Left lung (tissue), 14 donors: ENCODE measurements at regions of chr4 and their contacts with region 1.

Region 1: GRCh38 chr4:40309250-40309774 is 25.8 kb upstream of the CHRNA9 start:
- DNase-seq: peak; percentile 83 to 94 (median 90)
- ATAC-seq: peak; percentile 88
- H3K4me3 ChIP-seq: no peak overlapping the region
- H3K27ac ChIP-seq: no peak overlapping the region
- H3K4me1 ChIP-seq: peaks cover 0 to 53% of the 10 kb centered on the region in 2 donors
- H3K27me3 ChIP-seq: no peaks in the 10 kb centered on the region
- CTCF ChIP-seq: peak; percentile 90 to 92

Region 2: DNA sequence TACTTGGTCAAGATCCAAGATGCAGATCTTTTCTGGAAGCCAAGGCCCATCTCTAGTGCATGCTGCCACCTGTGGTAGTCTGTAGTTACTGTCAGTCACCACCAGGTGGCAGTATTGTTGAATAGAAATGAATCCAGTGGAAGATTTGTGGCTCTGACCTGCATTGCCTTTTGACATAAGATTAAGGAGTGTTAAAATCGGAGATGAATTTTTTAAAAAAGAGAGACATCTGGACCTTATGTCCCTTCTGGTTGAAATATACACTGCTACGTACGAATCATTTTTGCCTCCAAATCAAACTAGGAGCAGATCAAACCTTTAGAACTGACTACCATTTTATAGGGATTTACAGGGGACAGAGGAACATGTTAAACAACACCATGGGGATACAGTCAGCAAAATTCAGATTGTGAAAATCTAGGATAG is 159.3 kb before region 1 on chr4:
- intact Hi-C with region 1: loop called in 1 of 2 experiments (anchors 10 kb)
- DNase-seq: peak in 2 of 4 donors; percentile 14 to 40
- ATAC-seq: peak; percentile 97
- H3K4me3 ChIP-seq: no peak overlapping the region
- H3K27ac ChIP-seq: no peak overlapping the region
- H3K4me1 ChIP-seq: no peaks in the 10 kb centered on the region
- H3K27me3 ChIP-seq: no peaks in the 10 kb centered on the region
- CTCF ChIP-seq: peak; percentile 82 to 97

Region 3: DNA sequence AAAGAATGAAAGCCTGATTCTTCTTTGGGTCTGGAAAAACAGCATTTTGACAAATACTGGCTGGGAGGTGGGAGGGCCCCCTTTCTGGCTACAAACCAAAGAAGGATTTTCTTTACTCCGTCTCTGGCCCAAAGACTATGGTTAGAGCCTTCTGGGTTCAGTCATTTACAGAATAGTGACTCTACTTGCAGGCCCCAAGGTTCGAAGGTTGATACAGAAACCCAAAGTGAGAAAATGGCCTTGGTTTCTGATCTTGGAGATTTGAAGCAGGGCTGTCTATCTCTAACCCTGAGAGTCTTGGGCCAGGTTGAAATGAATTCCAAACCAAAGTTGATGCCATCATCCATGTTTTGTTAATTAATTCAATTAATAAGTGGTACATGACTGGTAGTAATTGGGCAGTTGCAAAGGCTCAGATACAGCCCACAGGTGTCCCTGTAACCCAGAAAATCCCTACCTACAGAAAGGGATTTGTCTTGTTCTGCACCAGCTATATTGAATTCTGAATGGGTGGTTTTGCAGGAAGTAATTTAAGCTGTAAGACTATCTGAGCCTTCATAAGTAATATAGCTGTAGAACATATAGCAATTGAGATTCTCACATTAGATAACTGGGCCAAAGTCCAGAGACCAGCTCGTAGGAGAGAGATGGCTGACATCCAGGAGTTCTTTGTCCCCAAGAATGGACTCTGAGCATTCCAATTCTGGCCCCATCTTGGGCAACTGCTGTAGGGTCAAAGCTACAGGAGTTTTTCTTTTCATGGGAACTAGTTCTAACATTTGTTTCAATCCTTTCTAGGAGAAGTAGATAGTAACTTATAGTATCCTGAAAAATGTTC is 60.3 kb after region 1 on chr4:
- intact Hi-C with region 1: no loop called
- DNase-seq: no peak
- ATAC-seq: peak; percentile 41
- H3K4me3 ChIP-seq: no peak overlapping the region
- H3K27ac ChIP-seq: no peak overlapping the region
- H3K4me1 ChIP-seq: no peaks in the 10 kb centered on the region
- H3K27me3 ChIP-seq: no peaks in the 10 kb centered on the region
- CTCF ChIP-seq: no peak